Transverse colon (tissue), 4 donors: ENCODE measurements at regions of chr2 and their contacts with region 1.

Region 1: DNA sequence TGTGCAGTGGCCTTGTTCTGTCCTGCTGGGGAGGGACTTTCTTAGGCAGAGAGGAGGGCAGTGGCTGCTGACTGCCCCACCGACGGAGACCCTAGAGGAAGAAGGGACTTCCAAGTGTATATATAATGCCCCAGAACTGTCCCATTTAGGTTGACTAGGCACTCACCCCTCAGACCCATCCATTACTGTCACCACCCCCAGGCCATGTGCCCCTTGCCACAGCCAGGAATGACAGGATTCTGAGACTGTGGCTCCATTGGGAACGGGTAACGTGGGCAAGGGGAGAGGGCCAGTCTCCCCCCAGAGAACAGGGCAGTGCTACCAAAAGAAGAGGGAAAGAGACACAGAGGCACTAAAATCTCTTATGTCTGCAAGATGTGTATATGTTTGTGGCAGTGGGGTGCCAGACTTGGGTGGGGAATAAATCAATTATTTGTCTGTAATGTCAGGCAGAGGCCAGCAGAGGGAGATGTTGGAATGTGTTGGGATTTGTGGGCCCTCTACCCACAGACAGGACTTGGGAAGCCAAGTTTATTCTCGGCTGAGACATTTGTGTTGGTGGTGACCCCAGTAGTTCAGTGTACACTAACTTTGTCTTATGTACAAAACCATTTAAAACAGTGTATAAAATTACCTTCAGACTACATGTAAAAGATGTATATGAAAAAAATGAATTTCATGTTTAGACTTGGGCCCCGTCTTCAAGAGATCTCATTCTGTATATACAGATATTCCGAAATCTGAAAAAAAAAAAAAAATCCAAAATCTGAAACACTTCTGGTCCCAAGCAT is 24.0 kb upstream of the TMEM37 start:
- DNase-seq: peak; percentile 56
- H3K4me3 ChIP-seq: no peak overlapping the region
- H3K27ac ChIP-seq: peak overlapping the region in 2 of 4 donors; percentile 4 to 39
- H3K4me1 ChIP-seq: peaks cover 4 to 16% (median 6%) of the 10 kb centered on the region in 4 donors
- H3K27me3 ChIP-seq: no peaks in the 10 kb centered on the region
- CTCF ChIP-seq: peak; percentile 74 to 96 (median 80)
- EP300 ChIP-seq: no peak
- POLR2A ChIP-seq: no peak

Region 2: GRCh38 chr2:118705032-118705431 is 702.6 kb before region 1 on chr2:
- in situ Hi-C with region 1: no loop called
- intact Hi-C with region 1: no loop called
- DNase-seq: no peak
- H3K4me3 ChIP-seq: no peak overlapping the region
- H3K27ac ChIP-seq: no peak overlapping the region
- H3K4me1 ChIP-seq: no peaks in the 10 kb centered on the region
- H3K27me3 ChIP-seq: no peaks in the 10 kb centered on the region
- CTCF ChIP-seq: no peak
- EP300 ChIP-seq: no peak
- POLR2A ChIP-seq: no peak

Region 3: GRCh38 chr2:119468154-119468955 is 60.7 kb after region 1 on chr2:
- in situ Hi-C with region 1: loop called in 2 of 4 experiments (anchors 5 to 10 kb)
- intact Hi-C with region 1: no loop called
- DNase-seq: no peak
- H3K4me3 ChIP-seq: no peak overlapping the region
- H3K27ac ChIP-seq: no peak overlapping the region
- H3K4me1 ChIP-seq: peaks cover 0 to 4% (median 0%) of the 10 kb centered on the region in 4 donors
- H3K27me3 ChIP-seq: no peaks in the 10 kb centered on the region
- CTCF ChIP-seq: no peak
- EP300 ChIP-seq: no peak
- POLR2A ChIP-seq: no peak

Region 4: GRCh38 chr2:119476301-119477021 is 68.8 kb after region 1 on chr2:
- in situ Hi-C with region 1: loop called in 3 of 4 experiments (anchors 5 to 10 kb)
- intact Hi-C with region 1: loop called (anchors 1 kb)
- DNase-seq: peak; percentile 53
- H3K4me3 ChIP-seq: no peak overlapping the region
- H3K27ac ChIP-seq: no peak overlapping the region
- H3K4me1 ChIP-seq: peaks cover 0 to 4% (median 3%) of the 10 kb centered on the region in 4 donors
- H3K27me3 ChIP-seq: peaks cover 6% of the 10 kb centered on the region
- CTCF ChIP-seq: peak; percentile 93 to 99 (median 98)
- EP300 ChIP-seq: no peak
- POLR2A ChIP-seq: no peak

Region 5: DNA sequence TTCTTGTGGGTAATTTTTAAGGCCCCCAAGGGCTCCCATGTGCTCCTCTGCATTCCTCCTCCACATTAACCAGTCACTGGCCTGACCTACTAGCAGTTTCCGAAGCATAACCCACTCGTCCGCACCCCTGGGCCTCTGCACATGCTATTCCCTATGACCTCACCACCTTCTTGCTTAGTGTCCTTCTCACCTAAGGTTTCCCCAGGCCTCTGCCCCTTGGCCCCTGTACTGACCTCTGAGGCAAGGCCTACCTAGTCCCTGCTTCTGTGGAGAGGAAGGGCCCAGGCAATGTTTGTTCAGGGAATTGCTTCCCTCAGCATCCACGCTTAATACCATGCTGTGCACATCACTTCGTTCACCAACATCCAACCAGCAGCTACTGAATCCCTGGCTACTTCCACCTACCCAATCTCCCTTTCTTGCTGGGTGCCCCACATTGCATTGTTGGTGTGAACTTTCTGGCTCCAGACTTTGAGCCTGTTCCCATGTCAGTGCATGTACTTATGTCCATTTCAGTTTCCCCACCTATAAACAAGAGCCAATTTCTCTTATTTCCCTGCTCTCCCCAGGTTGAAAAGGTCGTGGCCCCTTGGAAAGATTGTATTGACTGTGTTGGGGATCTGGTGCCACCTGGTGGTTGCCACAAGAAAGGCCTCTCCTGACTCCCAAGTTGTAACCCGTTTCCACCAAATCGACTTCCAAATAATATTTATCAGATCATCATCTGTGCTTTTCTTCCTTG is 252.1 kb after region 1 on chr2:
- in situ Hi-C with region 1: loop called in 1 of 4 experiments (anchors 25 kb)
- intact Hi-C with region 1: loop called (anchors 10 kb)
- DNase-seq: peak; percentile 42
- H3K4me3 ChIP-seq: no peak overlapping the region
- H3K27ac ChIP-seq: no peak overlapping the region
- H3K4me1 ChIP-seq: no peaks in the 10 kb centered on the region
- H3K27me3 ChIP-seq: no peaks in the 10 kb centered on the region
- CTCF ChIP-seq: peak; percentile 70 to 86 (median 76)
- EP300 ChIP-seq: no peak
- POLR2A ChIP-seq: no peak